ENCODE measurements at regions of chr3 and their contacts with region 1.

Region 1: DNA sequence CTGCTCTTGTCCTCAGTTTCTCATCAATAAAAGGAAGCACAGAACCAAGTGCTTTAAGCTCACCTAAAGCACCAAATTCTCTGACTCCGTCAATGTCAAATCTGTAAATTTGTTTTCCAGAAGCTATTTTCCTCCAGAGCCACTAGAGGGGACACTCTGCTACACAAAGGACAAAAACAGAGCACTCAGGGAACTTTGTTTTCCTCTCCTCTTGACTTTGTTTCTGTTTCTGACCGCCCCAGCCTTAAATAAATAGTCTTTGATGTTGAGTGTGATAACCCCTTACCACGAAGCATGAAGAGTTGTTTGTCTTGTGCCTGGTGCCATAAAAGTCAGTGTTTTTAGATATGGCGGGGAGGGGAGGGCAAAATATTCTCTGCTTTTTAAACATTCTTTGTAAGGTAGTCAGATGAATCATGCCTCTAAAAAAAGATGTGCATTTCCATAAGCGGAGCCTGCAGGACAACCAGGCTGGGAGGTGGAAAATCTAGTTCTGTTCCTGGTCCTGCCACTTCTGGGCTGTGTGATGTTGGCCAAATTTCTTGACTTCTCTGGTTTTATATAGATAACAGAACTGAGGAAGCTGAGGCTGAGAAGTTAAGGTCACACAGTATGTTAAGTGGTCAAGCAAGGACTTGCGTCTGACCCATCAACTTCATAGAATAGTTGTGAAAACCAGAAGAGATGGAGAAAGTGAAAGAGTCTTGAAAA is 7.3 kb upstream of the ZBTB38 start:
- DNase-seq: peak; percentile 69
- H3K4me3 Mint-ChIP-seq: peak overlapping the region; percentile 11
- H3K27ac Mint-ChIP-seq: peak overlapping the region; percentile 32
- H3K4me1 Mint-ChIP-seq: peaks cover 35% of the 10 kb centered on the region
- H3K27me3 Mint-ChIP-seq: no peaks in the 10 kb centered on the region
- CTCF ChIP-seq: peak; percentile 86

Region 2: DNA sequence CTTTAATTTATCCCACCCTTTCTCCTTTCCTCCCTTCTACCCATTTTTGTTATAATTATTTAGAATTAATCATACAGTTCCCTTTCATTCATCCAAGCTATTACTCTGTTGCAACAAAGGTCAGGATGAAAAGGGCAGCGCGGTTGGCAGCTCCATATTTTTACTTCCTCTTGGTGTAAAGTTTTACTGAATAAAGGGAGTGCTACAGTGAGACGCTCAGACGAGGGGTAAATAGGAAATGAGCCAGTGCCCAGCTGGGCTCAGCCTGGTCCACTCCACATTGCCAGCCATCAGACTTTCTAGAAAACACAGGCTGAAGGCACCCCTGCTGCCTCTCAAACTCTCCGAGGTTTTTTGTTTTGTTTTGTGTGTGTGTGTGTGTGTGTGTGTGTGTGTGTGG is 14.6 kb before region 1 on chr3:
- CTCF ChIA-PET with region 1: interaction called, 14 read pairs
- intact Hi-C with region 1: no loop called
- DNase-seq: peak; percentile 59
- H3K4me3 Mint-ChIP-seq: peak overlapping the region; percentile 9
- H3K27ac Mint-ChIP-seq: peak overlapping the region; percentile 10
- H3K4me1 Mint-ChIP-seq: peaks cover 18% of the 10 kb centered on the region
- H3K27me3 Mint-ChIP-seq: no peaks in the 10 kb centered on the region
- CTCF ChIP-seq: no peak

Region 3: DNA sequence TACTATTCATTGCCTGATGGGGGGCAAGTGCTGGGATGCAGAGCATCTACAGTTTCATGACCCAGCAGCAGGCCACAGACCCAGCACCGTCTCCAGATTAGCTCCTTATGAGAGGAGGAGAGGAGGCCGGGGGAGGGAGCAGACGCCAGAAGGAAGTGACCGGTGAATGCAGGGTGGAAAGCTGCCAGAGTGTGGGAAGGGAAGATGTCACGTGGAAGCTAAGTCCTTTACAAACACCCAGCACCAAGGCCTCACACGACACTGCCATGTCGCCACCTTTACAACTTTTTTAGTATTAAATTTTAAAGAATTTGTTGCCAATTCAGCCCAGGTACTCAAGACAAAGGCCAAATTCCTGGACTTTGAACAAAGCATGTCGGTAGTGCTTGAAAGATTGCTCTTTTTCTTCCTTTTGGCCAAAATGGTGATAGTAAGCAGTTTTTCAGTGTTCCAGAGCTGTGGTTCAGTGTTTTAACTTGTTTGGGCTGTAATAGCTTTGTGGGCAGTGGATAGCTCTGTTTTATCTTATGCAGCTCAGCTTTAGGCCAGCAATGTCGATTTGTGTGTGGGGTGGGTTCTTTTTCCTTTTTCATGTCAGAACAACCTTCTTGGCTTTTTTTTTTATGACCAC is 65.5 kb after region 1 on chr3:
- CTCF ChIA-PET with region 1: interaction called, 13 read pairs
- intact Hi-C with region 1: no loop called
- DNase-seq: peak; percentile 78
- H3K4me3 Mint-ChIP-seq: peak overlapping the region; percentile 2
- H3K27ac Mint-ChIP-seq: peak overlapping the region; percentile 55
- H3K4me1 Mint-ChIP-seq: peaks cover 18% of the 10 kb centered on the region
- H3K27me3 Mint-ChIP-seq: no peaks in the 10 kb centered on the region
- CTCF ChIP-seq: no peak

Region 4: DNA sequence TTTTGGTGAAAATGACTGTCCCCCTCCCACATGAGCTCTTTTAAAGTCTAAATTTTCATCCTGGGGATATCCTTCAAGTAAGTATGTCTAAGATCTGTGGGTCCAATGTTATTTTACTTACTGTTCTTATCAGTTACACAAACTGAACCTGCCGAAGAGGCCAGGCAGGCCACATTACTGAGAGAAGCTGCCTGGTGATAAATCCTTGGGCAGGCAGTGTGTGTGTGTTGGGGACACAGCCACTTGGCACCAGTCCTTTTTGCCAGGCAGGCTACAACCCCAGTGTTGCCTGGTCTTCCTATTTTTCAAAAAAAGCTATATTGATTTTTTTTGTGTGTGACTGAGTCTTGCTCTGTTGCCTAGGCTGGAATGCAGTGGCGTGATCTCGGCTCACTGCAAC is 75.1 kb after region 1 on chr3:
- CTCF ChIA-PET with region 1: interaction called, 12 read pairs
- intact Hi-C with region 1: loop called (anchors 1 kb)
- DNase-seq: peak; percentile 24
- H3K4me3 Mint-ChIP-seq: peak overlapping the region; percentile 5
- H3K27ac Mint-ChIP-seq: peak overlapping the region; percentile 55
- H3K4me1 Mint-ChIP-seq: peaks cover 48% of the 10 kb centered on the region
- H3K27me3 Mint-ChIP-seq: no peaks in the 10 kb centered on the region
- CTCF ChIP-seq: no peak

Region 5: GRCh38 chr3:141441381-141442364 is 80.6 kb after region 1 on chr3:
- CTCF ChIA-PET with region 1: interaction called, 12 read pairs
- intact Hi-C with region 1: loop called (anchors 1 kb)
- DNase-seq: peak; percentile 94
- H3K4me3 Mint-ChIP-seq: no peak overlapping the region
- H3K27ac Mint-ChIP-seq: peak overlapping the region; percentile 52
- H3K4me1 Mint-ChIP-seq: peaks cover 36% of the 10 kb centered on the region
- H3K27me3 Mint-ChIP-seq: no peaks in the 10 kb centered on the region
- CTCF ChIP-seq: peak; percentile 98

Region 6: DNA sequence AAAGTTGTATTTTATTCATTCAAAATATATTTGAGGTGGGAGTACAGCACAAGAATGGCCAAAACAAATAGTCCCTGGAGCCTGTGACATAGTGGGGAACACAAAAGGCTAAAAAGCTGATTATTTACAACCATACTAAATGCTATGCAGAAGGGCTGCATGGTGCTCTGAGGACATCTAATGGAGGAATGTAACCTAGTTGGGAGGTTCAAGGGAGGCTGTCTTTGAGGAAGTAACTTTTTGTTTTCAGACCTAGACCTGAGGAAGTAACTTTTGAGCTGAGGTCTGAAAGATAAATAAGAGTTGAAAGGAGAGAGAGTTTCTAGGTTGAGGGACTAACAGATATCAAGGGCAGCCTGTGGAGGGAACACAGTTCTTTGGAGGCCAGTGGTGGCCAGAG is 91.0 kb after region 1 on chr3:
- CTCF ChIA-PET with region 1: interaction called, 39 read pairs
- intact Hi-C with region 1: loop called (anchors 1 kb)
- DNase-seq: peak; percentile 56
- H3K4me3 Mint-ChIP-seq: no peak overlapping the region
- H3K27ac Mint-ChIP-seq: no peak overlapping the region
- H3K4me1 Mint-ChIP-seq: peaks cover 29% of the 10 kb centered on the region
- H3K27me3 Mint-ChIP-seq: no peaks in the 10 kb centered on the region
- CTCF ChIP-seq: no peak

Region 7: DNA sequence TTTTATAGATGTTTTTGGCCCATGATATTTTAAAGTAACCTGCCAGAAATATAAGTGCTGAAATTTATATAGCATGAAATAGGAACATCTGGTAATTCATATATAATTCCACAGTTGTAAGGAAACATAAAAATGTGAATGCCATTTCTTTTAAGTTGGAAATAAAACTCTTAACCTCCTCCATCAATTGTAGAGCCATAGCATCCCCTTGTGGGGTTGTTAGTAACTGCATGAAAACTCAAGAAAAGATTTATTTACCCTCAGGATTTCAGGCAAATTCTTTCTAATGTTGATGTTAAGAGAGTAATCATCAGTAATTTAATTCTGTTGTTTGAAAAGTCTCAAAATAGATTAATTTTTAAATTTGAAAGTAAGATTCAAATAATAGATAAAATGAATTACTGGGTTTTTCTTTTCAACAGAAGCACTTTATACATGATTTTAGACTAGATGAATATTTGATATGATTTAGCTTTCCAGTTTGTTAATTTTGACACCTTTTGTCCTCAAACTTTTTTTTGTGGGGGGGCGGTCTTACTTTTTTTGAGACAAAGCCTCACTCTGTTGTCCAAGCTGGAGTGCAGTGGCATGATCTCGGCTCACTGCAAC is 200.5 kb after region 1 on chr3:
- CTCF ChIA-PET with region 1: interaction called, 5 read pairs
- intact Hi-C with region 1: loop called (anchors 5 kb)
- DNase-seq: peak; percentile 76
- H3K4me3 Mint-ChIP-seq: no peak overlapping the region
- H3K27ac Mint-ChIP-seq: no peak overlapping the region
- H3K4me1 Mint-ChIP-seq: no peaks in the 10 kb centered on the region
- H3K27me3 Mint-ChIP-seq: no peaks in the 10 kb centered on the region
- CTCF ChIP-seq: peak; percentile 91

Region 8: GRCh38 chr3:141646760-141647561 is 285.9 kb after region 1 on chr3:
- CTCF ChIA-PET with region 1: no interaction called
- intact Hi-C with region 1: no loop called
- DNase-seq: peak; percentile 67
- H3K4me3 Mint-ChIP-seq: no peak overlapping the region
- H3K27ac Mint-ChIP-seq: no peak overlapping the region
- H3K4me1 Mint-ChIP-seq: no peaks in the 10 kb centered on the region
- H3K27me3 Mint-ChIP-seq: no peaks in the 10 kb centered on the region
- CTCF ChIP-seq: no peak